GM12878 (cell line): ENCODE measurements at regions of chr7 and their contacts with region 1.

Region 1: DNA sequence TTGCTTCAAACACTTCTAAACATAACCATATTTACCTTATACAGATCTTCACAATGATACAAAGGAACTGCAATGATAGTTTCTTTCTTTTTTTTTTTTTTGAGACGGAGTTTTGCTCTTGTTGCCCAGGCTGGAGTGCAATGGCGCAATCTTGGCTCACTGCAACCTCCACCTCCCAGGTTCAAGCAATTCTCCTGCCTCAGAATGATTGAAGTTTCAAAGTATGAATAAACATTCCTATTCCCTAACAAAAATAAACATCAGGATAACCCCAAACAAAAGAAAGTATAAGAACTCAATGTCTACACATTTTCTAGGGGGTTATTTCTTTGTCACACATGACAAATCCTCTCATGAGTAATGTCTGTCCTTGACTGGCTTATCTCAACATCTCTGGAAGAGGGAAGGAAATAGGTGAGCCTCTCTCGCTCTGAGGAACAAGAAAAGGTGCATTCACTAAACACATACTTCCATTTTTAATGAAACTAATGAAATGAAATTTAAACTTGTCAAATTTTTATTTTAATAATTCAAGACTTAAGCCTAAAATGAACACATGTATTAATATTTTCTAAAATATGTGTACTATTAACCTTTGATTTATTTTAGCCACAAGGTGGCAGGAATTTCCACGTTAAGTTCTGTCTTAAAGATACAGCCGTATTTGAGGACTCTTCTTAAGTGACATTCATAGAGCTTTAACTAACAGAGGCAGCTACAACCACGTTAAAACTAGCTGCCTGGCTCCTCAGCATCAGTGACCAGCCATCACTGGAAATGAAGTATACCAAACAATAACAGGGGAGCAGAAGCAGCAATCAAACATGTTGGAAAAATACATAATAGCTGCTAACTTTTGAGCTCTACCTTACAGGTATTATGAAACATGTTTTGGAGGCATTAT is 58.3 kb downstream of the MALSU1 start:
- DNase-seq: no peak
- ATAC-seq: peak; percentile 68
- H3K4me3 ChIP-seq: no peak overlapping the region
- H3K27ac ChIP-seq: no peak overlapping the region; the same call in 1 of the 2 replicates
- H3K4me1 ChIP-seq: peaks cover 30% of the 10 kb centered on the region
- H3K27me3 ChIP-seq: no peaks in the 10 kb centered on the region
- CTCF ChIP-seq: peak; percentile 23 to 62 (median 36); a peak in 2 of 6 replicates
- EP300 ChIP-seq: no peak
- POLR2A ChIP-seq: no peak
- RAD21 ChIP-seq: peak; percentile 72

Region 2: DNA sequence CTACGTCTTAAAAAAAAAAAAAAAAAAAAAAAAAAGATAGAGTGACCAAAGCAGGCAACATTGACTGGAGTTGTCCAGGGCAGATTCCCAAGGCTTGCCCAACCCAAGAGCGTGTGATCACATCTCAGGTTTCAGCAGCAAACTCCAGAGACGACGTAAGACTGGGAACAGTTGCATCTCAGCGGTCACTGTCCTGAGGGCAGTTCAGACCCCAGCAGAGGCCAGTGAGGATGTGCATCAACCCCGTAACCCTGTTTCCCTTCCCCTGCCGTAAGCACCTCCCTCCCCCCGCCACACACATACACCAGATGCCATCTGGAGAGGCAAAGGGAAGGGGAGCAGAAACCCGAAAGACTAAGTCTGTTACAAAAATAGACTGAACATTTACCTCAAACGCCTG is 515.5 kb before region 1 on chr7:
- CTCF ChIA-PET with region 1: no interaction called
- POLR2A ChIA-PET with region 1: no interaction called
- RAD21 ChIA-PET with region 1: no interaction called
- SMC1A ChIA-PET with region 1: no interaction called
- in situ Hi-C with region 1: no loop called
- intact Hi-C with region 1: no loop called
- DNase-seq: no peak
- ATAC-seq: no peak
- H3K4me3 ChIP-seq: no peak overlapping the region
- H3K27ac ChIP-seq: no peak overlapping the region
- H3K4me1 ChIP-seq: no peaks in the 10 kb centered on the region
- H3K27me3 ChIP-seq: no peaks in the 10 kb centered on the region
- CTCF ChIP-seq: no peak
- EP300 ChIP-seq: no peak
- POLR2A ChIP-seq: no peak
- RAD21 ChIP-seq: no peak

Region 3: DNA sequence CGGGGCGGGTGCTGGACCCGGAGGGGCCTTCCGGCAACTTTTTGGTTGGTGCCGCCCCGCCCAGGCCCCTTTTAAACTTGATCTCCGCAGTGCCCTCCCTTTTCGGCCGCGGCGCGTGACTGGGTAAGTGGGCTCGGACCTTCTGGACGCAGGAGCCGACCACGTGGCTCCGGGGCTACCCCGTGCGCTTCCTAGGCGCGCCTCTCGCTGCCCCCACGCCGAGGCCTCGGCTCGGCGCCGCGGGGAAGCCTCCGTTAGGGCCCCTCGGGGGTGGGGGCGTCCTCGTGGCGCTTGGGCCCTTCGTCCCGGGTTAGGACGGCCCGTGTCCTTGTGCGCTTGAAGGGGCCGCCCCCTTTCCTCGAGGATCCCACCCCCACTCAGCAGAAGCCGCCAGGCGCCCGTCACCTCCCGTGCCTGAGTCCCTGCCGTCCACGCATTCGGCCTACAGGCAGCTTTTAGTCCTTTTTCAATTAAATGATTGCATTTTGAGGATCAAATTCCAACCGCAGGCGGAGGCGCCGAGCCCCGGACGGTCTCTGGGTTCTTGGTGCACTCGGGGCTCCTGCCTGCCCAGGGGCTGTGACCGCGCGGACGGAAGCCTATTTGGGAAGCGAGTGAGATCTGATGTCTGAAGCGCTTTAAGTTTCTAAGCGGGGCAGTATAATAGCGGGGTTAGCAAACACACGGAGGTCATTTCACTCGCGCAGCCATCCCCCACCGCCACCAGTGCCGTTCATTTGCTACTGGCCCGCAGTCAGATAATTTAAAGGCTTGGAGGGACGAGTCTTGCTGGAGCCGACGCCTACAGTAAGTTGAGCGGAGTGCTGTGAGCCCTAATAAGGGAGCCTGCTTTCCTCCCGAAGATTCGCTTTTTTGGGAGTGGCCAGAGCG is 503.0 kb before region 1 on chr7:
- CTCF ChIA-PET with region 1: no interaction called
- POLR2A ChIA-PET with region 1: no interaction called
- RAD21 ChIA-PET with region 1: no interaction called
- SMC1A ChIA-PET with region 1: no interaction called
- in situ Hi-C with region 1: no loop called
- intact Hi-C with region 1: no loop called
- DNase-seq: peak; percentile 63
- ATAC-seq: peak; percentile 84
- H3K4me3 ChIP-seq: peak overlapping the region; percentile 84
- H3K27ac ChIP-seq: peak overlapping the region; percentile 94
- H3K4me1 ChIP-seq: peaks cover 14% of the 10 kb centered on the region
- H3K27me3 ChIP-seq: no peaks in the 10 kb centered on the region
- CTCF ChIP-seq: peak in 1 of 3 experiments; percentile 44; a peak in 1 of 6 replicates
- EP300 ChIP-seq: 0 out of 4 replicates have a peak, but pooled peaks of 1 of the 2 experiments have one; percentile 21
- POLR2A ChIP-seq: peak; percentile 89
- RAD21 ChIP-seq: no peak

Region 4: DNA sequence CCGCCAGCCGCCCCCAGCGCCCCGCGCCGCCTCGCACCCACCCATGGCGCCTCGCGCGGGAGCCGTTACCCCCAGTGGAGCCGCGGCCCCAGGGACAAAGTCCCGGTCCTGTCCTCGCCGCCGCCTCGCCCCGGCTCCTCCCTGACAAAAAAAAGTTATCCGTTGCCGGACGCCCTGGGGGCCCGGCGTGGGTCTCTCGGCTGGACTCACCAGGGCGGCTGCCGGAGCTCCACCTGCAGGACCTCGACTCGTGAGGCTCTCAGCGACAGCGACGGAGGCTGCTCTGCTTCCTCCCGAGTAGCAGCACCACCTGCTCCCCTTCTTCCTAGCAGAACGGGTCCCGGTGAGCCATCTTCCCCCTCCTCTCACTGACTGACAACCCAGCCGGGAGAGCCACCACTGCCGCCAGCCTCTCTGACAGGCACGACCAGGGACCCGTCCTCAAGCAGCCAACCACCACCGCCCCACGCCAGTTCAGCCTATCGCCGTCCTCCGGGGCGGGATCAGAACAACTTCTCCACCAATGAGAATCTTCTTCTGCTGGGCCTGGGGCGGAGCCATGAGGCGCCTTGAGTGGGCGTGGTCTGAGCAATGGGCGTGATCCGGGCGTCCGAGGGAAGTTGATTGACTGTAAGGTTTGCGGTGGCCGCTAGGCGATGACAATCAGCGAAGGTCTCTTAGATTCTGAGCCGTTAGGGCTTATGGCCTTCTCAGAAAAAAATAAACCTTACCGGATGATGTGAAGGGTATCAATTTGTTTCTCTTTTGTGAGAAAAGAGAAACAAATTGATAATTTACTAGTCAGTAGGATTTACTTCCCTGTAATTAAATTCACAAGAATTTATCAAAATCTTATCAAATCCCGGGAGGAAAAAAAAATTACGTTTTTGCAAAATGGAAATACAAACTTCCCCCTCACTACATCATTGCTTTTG is 343.5 kb before region 1 on chr7 and contains the start of gene HYCC1:
- CTCF ChIA-PET with region 1: no interaction called
- POLR2A ChIA-PET with region 1: no interaction called
- RAD21 ChIA-PET with region 1: no interaction called
- SMC1A ChIA-PET with region 1: no interaction called
- in situ Hi-C with region 1: no loop called
- intact Hi-C with region 1: no loop called
- DNase-seq: peak; percentile 98
- ATAC-seq: peak; percentile 94
- H3K4me3 ChIP-seq: peak within 1 kb of the TSS; percentile 95
- H3K27ac ChIP-seq: peak within 1 kb of the TSS; percentile 74
- H3K4me1 ChIP-seq: peaks cover 20% of the 10 kb centered on the region
- H3K27me3 ChIP-seq: no peaks in the 10 kb centered on the region
- CTCF ChIP-seq: peak; percentile 62 to 64 (median 64)
- EP300 ChIP-seq: no peak
- POLR2A ChIP-seq: peak; percentile 99
- RAD21 ChIP-seq: peak; percentile 34; the same call in 1 of the 2 replicates
- polyA plus RNA-seq, gene HYCC1: 8.5 to 9.9 TPM

Region 5: GRCh38 chr7:23175938-23176337 is 181.5 kb before region 1 on chr7:
- CTCF ChIA-PET with region 1: no interaction called
- POLR2A ChIA-PET with region 1: no interaction called
- RAD21 ChIA-PET with region 1: no interaction called
- SMC1A ChIA-PET with region 1: no interaction called
- in situ Hi-C with region 1: no loop called
- intact Hi-C with region 1: no loop called
- DNase-seq: no peak
- ATAC-seq: no peak
- H3K4me3 ChIP-seq: no peak overlapping the region
- H3K27ac ChIP-seq: no peak overlapping the region
- H3K4me1 ChIP-seq: no peaks in the 10 kb centered on the region
- H3K27me3 ChIP-seq: no peaks in the 10 kb centered on the region
- CTCF ChIP-seq: no peak
- EP300 ChIP-seq: no peak
- POLR2A ChIP-seq: no peak
- RAD21 ChIP-seq: no peak

Region 6: GRCh38 chr7:23273141-23273599 is 84.3 kb before region 1 on chr7:
- CTCF ChIA-PET with region 1: interaction called, 27 read pairs
- POLR2A ChIA-PET with region 1: interaction called, 3 read pairs
- RAD21 ChIA-PET with region 1: interaction called, 31 read pairs
- SMC1A ChIA-PET with region 1: interaction called, 13 read pairs
- in situ Hi-C with region 1: no loop called
- intact Hi-C with region 1: loop called (anchors 2 kb)
- DNase-seq: peak; percentile 78
- ATAC-seq: peak; percentile 98
- H3K4me3 ChIP-seq: peak overlapping the region; percentile 56
- H3K27ac ChIP-seq: peak overlapping the region; percentile 73
- H3K4me1 ChIP-seq: peaks cover 3% of the 10 kb centered on the region; the same call in 1 of the 2 replicates
- H3K27me3 ChIP-seq: no peaks in the 10 kb centered on the region
- CTCF ChIP-seq: peak; percentile 90 to 94 (median 92)
- EP300 ChIP-seq: no peak
- POLR2A ChIP-seq: peak; percentile 39; the same call in 1 of the 2 replicates
- RAD21 ChIP-seq: peak; percentile 67

Region 7: DNA sequence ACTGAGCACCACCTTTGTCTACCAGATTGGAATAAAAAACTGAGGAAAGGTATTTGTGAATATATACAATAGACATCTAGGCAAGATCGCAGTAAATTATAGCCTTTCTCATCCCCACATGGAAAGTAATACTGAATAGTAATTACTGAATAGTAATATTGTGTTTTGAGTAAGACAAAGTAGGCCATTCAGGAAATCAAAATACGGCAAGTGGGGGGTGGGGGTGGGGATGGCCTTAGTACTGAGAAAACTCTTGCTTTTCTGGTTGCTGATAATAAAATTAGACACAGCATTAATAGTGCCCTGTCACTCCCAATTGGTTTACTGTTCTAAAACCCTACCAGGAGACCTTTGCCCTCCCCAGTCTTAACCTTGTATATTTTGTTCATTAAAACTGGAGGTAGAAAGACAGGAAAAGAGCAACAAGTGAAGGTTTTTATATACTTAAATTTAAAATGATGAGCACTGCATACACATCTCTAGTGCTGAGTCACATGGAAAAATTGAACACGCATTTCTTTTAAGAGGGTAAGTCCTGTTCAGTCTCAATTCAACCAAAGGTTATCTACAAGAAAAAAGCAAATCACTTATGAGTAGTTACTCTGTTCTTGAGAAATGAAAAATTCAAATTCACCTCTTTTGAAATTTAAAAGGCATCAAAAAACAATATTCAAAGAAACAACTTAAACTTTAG is 47.3 kb after region 1 on chr7:
- CTCF ChIA-PET with region 1: interaction called, 10 read pairs
- POLR2A ChIA-PET with region 1: no interaction called
- RAD21 ChIA-PET with region 1: interaction called, 3 read pairs
- SMC1A ChIA-PET with region 1: interaction called, 12 read pairs
- in situ Hi-C with region 1: no loop called
- intact Hi-C with region 1: no loop called
- DNase-seq: no peak
- ATAC-seq: no peak
- H3K4me3 ChIP-seq: no peak overlapping the region
- H3K27ac ChIP-seq: no peak overlapping the region
- H3K4me1 ChIP-seq: no peaks in the 10 kb centered on the region
- H3K27me3 ChIP-seq: no peaks in the 10 kb centered on the region
- CTCF ChIP-seq: no peak
- EP300 ChIP-seq: no peak
- POLR2A ChIP-seq: no peak
- RAD21 ChIP-seq: no peak

Region 8: DNA sequence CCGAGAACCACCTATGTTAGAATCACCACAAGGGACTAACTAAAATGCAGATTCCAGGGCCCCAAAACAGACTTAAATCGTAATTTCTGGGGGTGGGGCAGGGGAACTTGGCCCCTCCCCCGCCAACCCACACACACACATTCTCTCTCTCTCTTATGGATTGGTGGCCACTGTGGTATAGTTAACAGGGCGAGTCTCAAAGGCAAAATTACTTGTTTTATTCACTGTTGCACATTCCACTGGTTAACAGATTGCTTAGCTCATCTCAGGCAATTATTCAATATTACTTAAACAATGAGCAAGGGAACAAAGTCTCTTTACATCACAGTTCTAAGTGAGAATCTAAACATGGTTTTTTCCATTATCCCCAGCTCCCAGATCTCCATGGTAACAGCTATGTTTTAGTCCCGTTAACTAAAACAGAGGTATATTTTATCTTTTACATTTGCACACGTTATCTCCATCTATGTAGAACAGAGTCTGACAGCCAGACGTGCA is 74.3 kb after region 1 on chr7:
- CTCF ChIA-PET with region 1: interaction called, 63 read pairs
- POLR2A ChIA-PET with region 1: interaction called, 3 read pairs
- RAD21 ChIA-PET with region 1: interaction called, 37 read pairs
- SMC1A ChIA-PET with region 1: interaction called, 35 read pairs
- in situ Hi-C with region 1: no loop called
- intact Hi-C with region 1: no loop called
- DNase-seq: no peak
- ATAC-seq: peak; percentile 14; the same call in 2 of the 3 replicates
- H3K4me3 ChIP-seq: no peak overlapping the region
- H3K27ac ChIP-seq: no peak overlapping the region
- H3K4me1 ChIP-seq: peaks cover 7% of the 10 kb centered on the region; the same call in 1 of the 2 replicates
- H3K27me3 ChIP-seq: no peaks in the 10 kb centered on the region
- CTCF ChIP-seq: no peak
- EP300 ChIP-seq: no peak
- POLR2A ChIP-seq: no peak
- RAD21 ChIP-seq: no peak

Region 9: GRCh38 chr7:23462846-23463245 is 105.4 kb after region 1 on chr7:
- CTCF ChIA-PET with region 1: interaction called, 10 read pairs
- POLR2A ChIA-PET with region 1: interaction called, 5 read pairs
- RAD21 ChIA-PET with region 1: interaction called, 9 read pairs
- SMC1A ChIA-PET with region 1: interaction called, 12 read pairs
- in situ Hi-C with region 1: no loop called
- intact Hi-C with region 1: no loop called
- DNase-seq: no peak
- ATAC-seq: peak; percentile 20
- H3K4me3 ChIP-seq: peak overlapping the region; percentile 39
- H3K27ac ChIP-seq: peak overlapping the region; percentile 57
- H3K4me1 ChIP-seq: peaks cover 10% of the 10 kb centered on the region
- H3K27me3 ChIP-seq: no peaks in the 10 kb centered on the region
- CTCF ChIP-seq: peak in 1 of 3 experiments; percentile 62; a peak in 3 of 6 replicates
- EP300 ChIP-seq: no peak
- POLR2A ChIP-seq: no peak
- RAD21 ChIP-seq: peak; percentile 66

Region 10: GRCh38 chr7:23520582-23520981 is 163.1 kb after region 1 on chr7:
- CTCF ChIA-PET with region 1: interaction called, 19 read pairs
- POLR2A ChIA-PET with region 1: interaction called, 3 read pairs
- RAD21 ChIA-PET with region 1: interaction called, 10 read pairs
- SMC1A ChIA-PET with region 1: interaction called, 23 read pairs
- in situ Hi-C with region 1: no loop called
- intact Hi-C with region 1: no loop called
- DNase-seq: no peak
- ATAC-seq: no peak
- H3K4me3 ChIP-seq: no peak overlapping the region
- H3K27ac ChIP-seq: no peak overlapping the region
- H3K4me1 ChIP-seq: peaks cover 5% of the 10 kb centered on the region
- H3K27me3 ChIP-seq: no peaks in the 10 kb centered on the region
- CTCF ChIP-seq: no peak
- EP300 ChIP-seq: no peak
- POLR2A ChIP-seq: no peak
- RAD21 ChIP-seq: 0 out of 2 replicates have a peak, but pooled peaks have one; percentile 12

Region 11: GRCh38 chr7:23570592-23571200 is 213.3 kb after region 1 on chr7:
- CTCF ChIA-PET with region 1: interaction called, 10 read pairs
- POLR2A ChIA-PET with region 1: interaction called, 4 read pairs
- RAD21 ChIA-PET with region 1: interaction called, 9 read pairs
- SMC1A ChIA-PET with region 1: interaction called, 11 read pairs
- in situ Hi-C with region 1: no loop called
- intact Hi-C with region 1: no loop called
- DNase-seq: peak; percentile 60
- ATAC-seq: peak; percentile 99
- H3K4me3 ChIP-seq: no peak overlapping the region
- H3K27ac ChIP-seq: no peak overlapping the region
- H3K4me1 ChIP-seq: no peaks in the 10 kb centered on the region
- H3K27me3 ChIP-seq: no peaks in the 10 kb centered on the region
- CTCF ChIP-seq: peak; percentile 76 to 98 (median 90)
- EP300 ChIP-seq: no peak
- POLR2A ChIP-seq: no peak
- RAD21 ChIP-seq: peak; percentile 100